T-cell (primary cell): ENCODE measurements at regions of chr22 and their contacts with region 1.

Region 1: DNA sequence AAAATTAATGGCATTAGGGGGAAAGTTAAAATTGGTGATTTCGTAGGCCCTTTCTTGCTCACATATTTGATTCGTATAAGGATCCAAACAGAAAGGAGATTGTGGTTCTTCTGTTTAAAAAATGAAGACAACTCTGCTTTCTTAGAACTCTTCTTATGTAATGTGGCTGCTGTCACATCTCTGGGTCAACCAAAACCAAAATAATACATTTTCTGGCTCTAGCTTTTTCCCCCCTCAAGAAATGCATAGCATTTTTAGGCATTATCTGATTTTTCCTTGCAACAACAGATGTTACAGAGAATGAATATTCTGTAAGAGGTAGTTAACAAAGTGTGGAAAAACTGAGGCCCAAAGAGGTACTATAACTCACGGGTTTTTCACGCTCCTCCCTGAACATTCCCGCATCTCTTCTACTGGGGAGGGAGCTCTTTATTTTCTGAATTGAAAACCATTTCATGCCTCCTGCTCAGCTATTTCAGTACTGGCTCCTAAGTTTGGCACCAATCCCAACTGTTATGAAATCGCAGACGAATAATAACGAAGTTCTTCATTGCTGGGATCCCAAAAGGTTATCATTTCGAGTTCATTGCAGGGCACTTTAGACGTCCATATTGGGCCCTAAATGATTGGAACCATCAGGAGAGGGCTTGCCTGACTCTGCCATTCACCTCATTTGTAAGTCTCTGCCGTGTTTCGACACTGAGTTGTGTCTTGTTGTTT is 17.1 kb downstream of the GRAP2 start:
- DNase-seq: no peak
- ATAC-seq: peak in 3 of 4 experiments; percentile 13 to 20 (median 14)
- H3K4me3 ChIP-seq: peak overlapping the region in 1 of 2 donors; percentile 8
- H3K4me3 Mint-ChIP-seq: peak overlapping the region; percentile 63 to 84 (median 63)
- H3K27ac ChIP-seq: peak overlapping the region; percentile 82
- H3K27ac Mint-ChIP-seq: peak overlapping the region; percentile 93 to 94
- H3K4me1 ChIP-seq: peaks cover 80 to 89% of the 10 kb centered on the region in 2 experiments
- H3K4me1 Mint-ChIP-seq: peaks cover 90 to 98% (median 91%) of the 10 kb centered on the region in 3 donors
- H3K27me3 ChIP-seq: no peaks in the 10 kb centered on the region
- H3K27me3 Mint-ChIP-seq: no peaks in the 10 kb centered on the region

Region 2: DNA sequence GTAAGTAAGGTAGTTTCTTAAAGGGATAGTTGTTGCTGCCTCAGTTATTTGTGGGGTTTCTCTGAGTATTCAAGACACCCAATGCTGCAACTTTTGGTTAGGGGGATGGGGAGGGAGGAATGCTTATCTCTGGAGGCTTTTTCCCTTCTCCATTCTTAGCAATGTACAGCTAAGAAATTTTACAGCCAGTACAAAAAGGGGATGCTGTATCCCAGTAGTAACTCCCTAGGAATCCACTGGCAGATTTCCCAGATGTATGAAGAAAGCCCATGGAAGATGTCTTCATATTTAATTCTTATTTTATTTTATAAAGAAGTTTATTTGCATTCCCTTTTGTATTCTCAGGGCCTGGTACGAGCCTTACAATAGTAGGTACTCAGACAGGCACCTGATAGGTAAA is 179.2 kb before region 1 on chr22:
- CTCF ChIA-PET with region 1: no interaction called
- POLR2A ChIA-PET with region 1: no interaction called
- DNase-seq: no peak
- ATAC-seq: no peak
- H3K4me3 ChIP-seq: no peak overlapping the region
- H3K4me3 Mint-ChIP-seq: no peak overlapping the region
- H3K27ac ChIP-seq: no peak overlapping the region
- H3K27ac Mint-ChIP-seq: no peak overlapping the region
- H3K4me1 ChIP-seq: no peaks in the 10 kb centered on the region
- H3K4me1 Mint-ChIP-seq: no peaks in the 10 kb centered on the region
- H3K27me3 ChIP-seq: peaks cover 0 to 5% of the 10 kb centered on the region in 2 experiments
- H3K27me3 Mint-ChIP-seq: peaks cover 8 to 13% of the 10 kb centered on the region in 2 donors

Region 3: GRCh38 chr22:39960791-39961746 is 43.1 kb after region 1 on chr22:
- CTCF ChIA-PET with region 1: interaction called in 1 of 2 experiments, 3 read pairs
- POLR2A ChIA-PET with region 1: interaction called, 6 to 11 read pairs
- DNase-seq: peak in 34 of 35 experiments; percentile 23 to 77 (median 55)
- ATAC-seq: peak; percentile 74 to 86 (median 78)
- H3K4me3 ChIP-seq: no peak overlapping the region
- H3K4me3 Mint-ChIP-seq: peak overlapping the region in 2 of 3 donors; percentile 47 to 66
- H3K27ac ChIP-seq: peak overlapping the region; percentile 66
- H3K27ac Mint-ChIP-seq: peak overlapping the region; percentile 88 to 91
- H3K4me1 ChIP-seq: peaks cover 30 to 64% of the 10 kb centered on the region in 2 experiments
- H3K4me1 Mint-ChIP-seq: peaks cover 60 to 68% (median 61%) of the 10 kb centered on the region in 3 donors
- H3K27me3 ChIP-seq: no peaks in the 10 kb centered on the region
- H3K27me3 Mint-ChIP-seq: no peaks in the 10 kb centered on the region

Region 4: GRCh38 chr22:40076702-40077645 is 159.0 kb after region 1 on chr22:
- CTCF ChIA-PET with region 1: no interaction called
- POLR2A ChIA-PET with region 1: no interaction called
- DNase-seq: no peak
- ATAC-seq: peak in 2 of 4 experiments; percentile 26 to 60
- H3K4me3 ChIP-seq: no peak overlapping the region
- H3K4me3 Mint-ChIP-seq: peak overlapping the region in 2 of 3 donors; percentile 36 to 66
- H3K27ac ChIP-seq: no peak overlapping the region
- H3K27ac Mint-ChIP-seq: peak overlapping the region; percentile 49 to 69
- H3K4me1 ChIP-seq: peaks cover 16 to 43% of the 10 kb centered on the region in 2 experiments
- H3K4me1 Mint-ChIP-seq: peaks cover 50 to 58% (median 53%) of the 10 kb centered on the region in 3 donors
- H3K27me3 ChIP-seq: no peaks in the 10 kb centered on the region
- H3K27me3 Mint-ChIP-seq: no peaks in the 10 kb centered on the region

Region 5: DNA sequence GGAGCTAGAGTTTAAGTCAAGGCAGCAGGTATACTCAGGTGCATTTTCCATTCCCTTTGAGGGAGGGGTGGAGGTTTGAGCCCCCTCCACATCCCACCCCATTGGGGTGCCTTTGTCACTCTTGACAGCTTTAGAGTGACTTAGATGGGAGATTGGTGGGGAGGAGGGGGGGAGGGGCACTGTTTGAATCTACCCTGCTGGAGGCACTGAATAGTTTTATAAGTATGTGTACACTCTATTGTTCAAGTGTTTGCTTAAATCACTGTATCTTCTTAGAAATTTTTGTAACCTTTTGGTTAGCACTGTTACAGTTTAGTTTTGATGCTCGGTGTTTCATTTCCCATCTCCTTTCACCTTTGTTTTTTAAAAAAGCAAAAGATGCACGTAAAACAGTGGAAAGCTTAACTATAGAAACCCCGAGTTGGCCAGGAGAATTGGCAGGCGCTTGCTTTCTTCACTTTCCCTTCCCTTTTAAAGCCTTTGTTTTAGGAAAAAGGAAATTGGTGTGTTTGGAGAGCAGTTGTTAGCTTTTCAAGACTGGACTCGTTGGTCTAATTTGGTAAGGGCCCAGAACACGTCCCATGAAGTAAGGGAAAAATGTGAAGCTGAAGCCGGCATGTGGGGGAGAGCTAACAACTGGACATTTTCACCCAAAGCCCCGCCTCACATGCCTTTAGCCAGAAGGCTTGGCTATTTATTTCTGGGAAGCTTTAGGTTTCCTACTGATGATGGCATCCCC is 302.5 kb after region 1 on chr22:
- CTCF ChIA-PET with region 1: no interaction called
- POLR2A ChIA-PET with region 1: interaction called in 1 of 2 experiments, 11 read pairs
- DNase-seq: no peak
- ATAC-seq: no peak
- H3K4me3 ChIP-seq: no peak overlapping the region
- H3K4me3 Mint-ChIP-seq: peak overlapping the region in 1 of 3 donors; percentile 73
- H3K27ac ChIP-seq: no peak overlapping the region
- H3K27ac Mint-ChIP-seq: peak overlapping the region; percentile 7 to 35
- H3K4me1 ChIP-seq: peaks cover 49 to 80% of the 10 kb centered on the region in 2 experiments
- H3K4me1 Mint-ChIP-seq: peaks cover 83 to 88% (median 84%) of the 10 kb centered on the region in 3 donors
- H3K27me3 ChIP-seq: no peaks in the 10 kb centered on the region
- H3K27me3 Mint-ChIP-seq: no peaks in the 10 kb centered on the region